ENCODE measurements at regions of chr5 and their contacts with region 1.

Region 1: DNA sequence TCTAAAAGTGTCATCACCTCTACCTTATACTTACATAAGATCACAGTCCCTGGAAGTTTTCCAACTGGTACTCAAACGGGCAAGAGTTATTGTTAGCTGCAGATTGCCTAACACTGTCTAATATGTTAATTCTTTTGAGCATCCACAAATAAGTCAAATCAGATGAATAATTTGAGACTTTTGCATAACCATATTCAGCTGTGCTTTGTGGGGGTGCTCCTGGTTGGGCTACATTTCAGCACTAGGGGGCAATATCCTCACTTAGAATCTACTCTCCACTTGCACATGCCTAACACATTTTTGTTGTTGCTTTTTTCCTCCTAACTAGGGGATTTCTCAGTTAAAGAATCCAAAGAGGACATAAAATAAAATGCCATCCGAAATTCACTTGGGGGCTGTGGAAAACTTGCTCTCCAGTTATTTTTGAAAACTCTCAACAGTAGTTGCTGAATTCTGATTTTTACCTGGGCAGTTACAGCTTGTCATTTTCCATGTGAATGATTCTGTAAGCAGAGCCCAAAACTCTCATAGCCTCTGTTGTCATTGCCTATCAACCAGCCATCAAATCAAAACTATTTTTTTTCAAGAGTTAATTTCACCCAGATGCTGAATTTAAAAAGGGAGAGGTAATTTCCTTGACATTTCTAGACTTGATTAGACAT is 71.5 kb downstream of the TRIM36 start:
- DNase-seq: peak; percentile 36
- H3K4me3 Mint-ChIP-seq: no peak overlapping the region
- H3K27ac Mint-ChIP-seq: no peak overlapping the region
- H3K4me1 Mint-ChIP-seq: no peaks in the 10 kb centered on the region
- H3K27me3 Mint-ChIP-seq: peaks cover 11% of the 10 kb centered on the region

Region 2: GRCh38 chr5:115084246-115084793 is 13.9 kb before region 1 on chr5:
- CTCF ChIA-PET with region 1: interaction called, 10 read pairs
- POLR2A ChIA-PET with region 1: no interaction called
- intact Hi-C with region 1: no loop called
- DNase-seq: no peak
- H3K4me3 Mint-ChIP-seq: no peak overlapping the region
- H3K27ac Mint-ChIP-seq: no peak overlapping the region
- H3K4me1 Mint-ChIP-seq: no peaks in the 10 kb centered on the region
- H3K27me3 Mint-ChIP-seq: peaks cover 12% of the 10 kb centered on the region

Region 3: GRCh38 chr5:115246361-115246991 is 148.3 kb after region 1 on chr5:
- CTCF ChIA-PET with region 1: interaction called, 72 read pairs
- POLR2A ChIA-PET with region 1: no interaction called
- intact Hi-C with region 1: loop called (anchors 1 kb)
- DNase-seq: no peak
- H3K4me3 Mint-ChIP-seq: no peak overlapping the region
- H3K27ac Mint-ChIP-seq: no peak overlapping the region
- H3K4me1 Mint-ChIP-seq: peaks cover 16% of the 10 kb centered on the region
- H3K27me3 Mint-ChIP-seq: no peaks in the 10 kb centered on the region

Region 4: DNA sequence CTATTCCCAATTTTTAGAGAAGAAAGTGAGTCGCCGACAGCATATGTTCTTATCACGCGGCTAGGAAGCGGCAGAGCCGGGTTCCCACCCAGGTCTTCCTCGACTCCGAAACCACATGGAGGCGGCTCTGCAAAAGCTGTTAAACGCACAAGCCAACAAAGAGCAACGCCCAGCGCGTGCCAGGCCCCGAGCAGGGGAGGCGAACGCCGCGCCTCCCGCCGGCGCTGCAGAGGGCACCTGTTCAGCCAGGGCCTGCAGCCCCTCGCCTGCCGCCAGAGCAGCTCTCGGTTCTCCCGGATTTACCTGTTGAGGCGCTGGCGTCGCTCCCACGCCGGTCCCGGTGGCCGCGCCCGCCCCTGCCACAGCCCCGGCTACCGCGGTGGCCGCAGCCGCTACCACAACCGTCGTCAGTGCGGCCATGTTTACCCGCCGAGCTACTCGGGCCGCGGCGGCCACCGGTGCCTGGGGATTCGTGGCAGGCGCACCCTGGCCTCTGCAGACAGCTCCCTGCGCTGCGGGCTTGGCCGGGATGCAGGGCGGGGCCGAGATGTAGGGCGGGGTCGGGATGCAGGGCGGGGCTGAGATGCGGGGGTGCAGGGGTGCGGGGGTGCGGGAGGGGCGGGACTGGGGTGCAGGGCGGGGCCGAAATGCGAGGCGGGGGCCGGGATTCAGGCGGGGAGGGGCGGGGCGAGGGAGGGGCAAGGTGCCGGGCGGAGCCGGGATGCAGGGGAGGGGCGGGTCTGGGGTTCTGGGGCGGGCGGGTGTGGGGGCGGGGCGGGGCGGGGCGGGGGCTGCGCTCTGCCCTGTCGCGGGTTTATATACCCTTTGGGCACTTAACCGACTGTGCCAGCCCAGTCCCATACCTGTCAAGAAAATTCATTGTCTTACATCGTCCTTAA is 198.2 kb after region 1 on chr5 and contains the start of gene CCDC112:
- CTCF ChIA-PET with region 1: interaction called, 3 read pairs
- POLR2A ChIA-PET with region 1: no interaction called
- intact Hi-C with region 1: loop called (anchors 1 kb)
- DNase-seq: peak; percentile 87
- H3K4me3 Mint-ChIP-seq: peak within 1 kb of the TSS; percentile 76
- H3K27ac Mint-ChIP-seq: no peak within 1 kb of the TSS
- H3K4me1 Mint-ChIP-seq: peaks cover 7% of the 10 kb centered on the region
- H3K27me3 Mint-ChIP-seq: peaks cover 8% of the 10 kb centered on the region
- total RNA-seq, gene CCDC112: 1.7 to 1.8 TPM

Region 5: GRCh38 chr5:115579747-115580173 is 481.6 kb after region 1 on chr5:
- CTCF ChIA-PET with region 1: no interaction called
- POLR2A ChIA-PET with region 1: no interaction called
- intact Hi-C with region 1: loop called (anchors 2 kb)
- DNase-seq: no peak
- H3K4me3 Mint-ChIP-seq: no peak overlapping the region
- H3K27ac Mint-ChIP-seq: no peak overlapping the region
- H3K4me1 Mint-ChIP-seq: no peaks in the 10 kb centered on the region
- H3K27me3 Mint-ChIP-seq: no peaks in the 10 kb centered on the region

Region 6: GRCh38 chr5:115586601-115587048 is 488.5 kb after region 1 on chr5:
- CTCF ChIA-PET with region 1: no interaction called
- POLR2A ChIA-PET with region 1: no interaction called
- intact Hi-C with region 1: loop called (anchors 5 kb)
- DNase-seq: no peak
- H3K4me3 Mint-ChIP-seq: no peak overlapping the region
- H3K27ac Mint-ChIP-seq: no peak overlapping the region
- H3K4me1 Mint-ChIP-seq: no peaks in the 10 kb centered on the region
- H3K27me3 Mint-ChIP-seq: no peaks in the 10 kb centered on the region